ENCODE measurements at regions of chr21 and their contacts with region 1.

Region 1: DNA sequence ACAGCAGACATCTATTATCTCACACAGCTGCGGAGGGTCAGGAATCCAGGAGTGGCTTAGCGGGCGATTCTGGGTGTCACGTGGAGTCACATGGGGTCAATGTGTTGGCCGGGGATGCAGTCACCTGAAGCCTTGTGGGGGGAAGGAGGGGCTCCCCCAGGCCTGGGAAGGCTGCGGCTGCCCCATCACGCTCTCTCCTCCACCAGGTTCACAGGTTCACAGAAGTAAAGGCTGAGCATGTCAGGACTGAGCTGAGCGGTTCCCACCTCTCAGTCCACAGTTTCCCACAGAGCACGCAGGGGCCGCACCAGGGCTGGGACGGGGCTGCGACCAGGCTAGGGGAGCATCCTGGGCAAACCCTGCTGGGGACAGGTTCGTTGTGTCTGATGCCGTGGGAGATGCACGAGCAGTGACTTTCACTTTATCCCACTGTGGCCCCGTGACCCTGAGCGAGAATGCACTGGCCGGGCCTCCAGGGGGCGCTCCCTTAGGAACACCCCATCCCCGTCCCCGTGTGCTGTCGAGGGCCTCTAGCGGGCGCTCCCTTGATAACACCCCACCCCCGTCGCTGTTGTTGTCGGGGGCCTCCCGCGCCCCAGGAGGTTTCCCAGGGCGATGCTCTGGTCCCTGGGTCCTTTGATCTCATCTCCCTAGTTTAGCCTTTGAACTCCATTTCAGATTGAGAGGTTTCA is 73.2 kb upstream of the TRAPPC10 start:
- DNase-seq: peak; percentile 82
- ATAC-seq: peak; percentile 97
- H3K4me3 Mint-ChIP-seq: peak overlapping the region; percentile 92
- H3K27ac Mint-ChIP-seq: peak overlapping the region; percentile 74
- H3K4me1 Mint-ChIP-seq: peaks cover 22% of the 10 kb centered on the region
- H3K27me3 Mint-ChIP-seq: no peaks in the 10 kb centered on the region
- CTCF ChIP-seq: peak; percentile 47

Region 2: DNA sequence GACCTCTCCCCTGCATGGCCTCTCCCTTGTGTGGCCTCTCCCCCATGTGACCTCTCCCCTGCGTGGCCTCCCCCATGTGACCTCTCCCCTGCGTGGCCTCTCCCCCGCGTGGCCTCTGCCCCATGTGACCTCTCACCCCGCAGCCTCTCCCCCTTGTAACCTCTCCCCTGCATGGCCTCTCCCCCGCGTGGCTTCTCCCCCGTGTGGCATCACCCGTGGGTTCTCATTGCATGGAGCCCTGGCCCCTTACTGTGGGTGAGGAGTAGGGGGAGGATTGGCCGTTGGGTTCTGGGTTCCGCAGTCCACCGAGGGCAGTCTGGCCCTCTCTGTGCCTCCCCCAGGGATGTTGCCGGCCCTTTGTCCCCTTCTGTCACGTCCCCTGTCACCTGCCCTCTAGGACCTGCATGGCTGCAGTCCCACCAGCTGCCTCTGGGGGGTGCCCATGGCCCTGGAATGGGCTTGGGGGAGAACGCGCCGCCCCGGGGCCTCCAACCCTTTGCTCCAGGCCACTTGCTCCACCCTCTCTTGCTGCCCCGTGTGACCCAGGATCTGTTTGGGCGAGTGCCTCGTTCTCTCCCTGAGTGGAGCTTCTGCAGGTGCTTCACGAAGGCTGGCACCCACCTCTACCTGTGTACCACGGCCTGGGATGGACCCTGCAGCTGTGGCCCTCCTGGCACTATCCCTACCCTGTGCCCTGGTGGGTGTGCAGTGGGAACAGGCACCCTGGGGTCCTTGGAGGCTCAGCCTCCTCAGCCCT is 128.2 kb before region 1 on chr21:
- CTCF ChIA-PET with region 1: interaction called, 9 read pairs
- POLR2A ChIA-PET with region 1: interaction called, 3 read pairs
- intact Hi-C with region 1: loop called (anchors 1 kb)
- DNase-seq: peak; percentile 88
- ATAC-seq: peak; percentile 97
- H3K4me3 Mint-ChIP-seq: no peak overlapping the region
- H3K27ac Mint-ChIP-seq: no peak overlapping the region
- H3K4me1 Mint-ChIP-seq: peaks cover 28% of the 10 kb centered on the region
- H3K27me3 Mint-ChIP-seq: peaks cover 7% of the 10 kb centered on the region
- CTCF ChIP-seq: peak; percentile 68

Region 3: DNA sequence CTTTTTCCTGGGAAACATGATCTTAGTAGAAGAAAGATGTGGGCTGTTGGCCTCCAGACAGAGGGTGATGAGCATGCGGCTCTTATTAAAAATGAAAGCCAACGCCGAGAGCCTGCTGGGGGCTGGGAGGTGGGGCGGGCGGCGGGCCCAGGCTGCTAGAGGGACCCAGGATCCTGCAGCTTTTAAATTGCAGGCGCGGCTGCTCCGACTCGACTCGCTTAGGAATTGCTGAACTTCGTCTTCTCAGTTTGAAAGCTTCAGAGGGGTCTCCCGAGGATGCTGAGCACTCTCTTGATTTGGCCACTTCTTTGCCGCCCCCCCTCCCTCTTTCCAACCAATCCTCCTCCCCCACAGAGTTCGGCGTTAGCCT is 72.7 kb before region 1 on chr21:
- CTCF ChIA-PET with region 1: no interaction called
- POLR2A ChIA-PET with region 1: no interaction called
- intact Hi-C with region 1: loop called (anchors 1 kb)
- DNase-seq: no peak
- ATAC-seq: peak; percentile 29
- H3K4me3 Mint-ChIP-seq: peak overlapping the region; percentile 82
- H3K27ac Mint-ChIP-seq: peak overlapping the region; percentile 83
- H3K4me1 Mint-ChIP-seq: peaks cover 46% of the 10 kb centered on the region
- H3K27me3 Mint-ChIP-seq: no peaks in the 10 kb centered on the region
- CTCF ChIP-seq: no peak

Region 4: DNA sequence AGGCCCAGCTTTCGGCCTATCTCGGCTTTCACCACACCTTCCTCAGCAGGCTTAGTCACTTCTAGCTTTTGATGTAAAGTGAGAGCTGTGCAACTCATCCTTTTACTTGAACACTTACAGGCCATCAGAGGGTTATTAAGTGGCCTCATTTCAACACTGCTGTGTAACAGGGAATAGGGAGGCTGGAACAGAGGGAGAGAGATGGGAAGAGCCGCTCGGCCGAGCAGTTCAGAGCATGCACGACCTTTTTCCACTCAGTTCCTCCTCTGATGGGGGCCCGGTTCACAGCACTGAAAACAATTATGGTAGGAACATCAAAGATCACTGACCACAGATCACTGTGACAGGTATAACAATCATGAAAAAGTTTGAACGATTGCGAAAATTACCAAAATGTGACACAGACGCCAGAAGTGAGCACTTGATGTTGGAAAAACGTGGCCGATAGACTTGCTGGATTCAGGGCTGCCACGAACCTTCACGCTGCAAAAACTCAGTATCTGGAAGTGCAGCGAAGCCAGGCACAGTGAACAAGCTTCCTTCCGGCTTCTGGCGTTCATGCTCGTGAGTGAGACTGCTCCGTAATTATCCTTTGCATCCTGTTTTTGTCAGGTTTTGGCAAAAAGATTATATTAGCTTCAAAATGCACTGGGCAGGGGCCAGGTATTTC is 45.2 kb before region 1 on chr21:
- CTCF ChIA-PET with region 1: interaction called, 3 read pairs
- POLR2A ChIA-PET with region 1: no interaction called
- intact Hi-C with region 1: loop called (anchors 2 kb)
- DNase-seq: no peak
- ATAC-seq: peak; percentile 57
- H3K4me3 Mint-ChIP-seq: peak overlapping the region; percentile 77
- H3K27ac Mint-ChIP-seq: peak overlapping the region; percentile 30
- H3K4me1 Mint-ChIP-seq: peaks cover 26% of the 10 kb centered on the region
- H3K27me3 Mint-ChIP-seq: no peaks in the 10 kb centered on the region
- CTCF ChIP-seq: no peak

Region 5: GRCh38 chr21:43916691-43917514 is 22.0 kb before region 1 on chr21:
- CTCF ChIA-PET with region 1: no interaction called
- POLR2A ChIA-PET with region 1: no interaction called
- intact Hi-C with region 1: loop called (anchors 1 kb)
- DNase-seq: peak; percentile 37
- ATAC-seq: peak; percentile 64
- H3K4me3 Mint-ChIP-seq: peak overlapping the region; percentile 81
- H3K27ac Mint-ChIP-seq: peak overlapping the region; percentile 68
- H3K4me1 Mint-ChIP-seq: peaks cover 63% of the 10 kb centered on the region
- H3K27me3 Mint-ChIP-seq: no peaks in the 10 kb centered on the region
- CTCF ChIP-seq: no peak

Region 6: DNA sequence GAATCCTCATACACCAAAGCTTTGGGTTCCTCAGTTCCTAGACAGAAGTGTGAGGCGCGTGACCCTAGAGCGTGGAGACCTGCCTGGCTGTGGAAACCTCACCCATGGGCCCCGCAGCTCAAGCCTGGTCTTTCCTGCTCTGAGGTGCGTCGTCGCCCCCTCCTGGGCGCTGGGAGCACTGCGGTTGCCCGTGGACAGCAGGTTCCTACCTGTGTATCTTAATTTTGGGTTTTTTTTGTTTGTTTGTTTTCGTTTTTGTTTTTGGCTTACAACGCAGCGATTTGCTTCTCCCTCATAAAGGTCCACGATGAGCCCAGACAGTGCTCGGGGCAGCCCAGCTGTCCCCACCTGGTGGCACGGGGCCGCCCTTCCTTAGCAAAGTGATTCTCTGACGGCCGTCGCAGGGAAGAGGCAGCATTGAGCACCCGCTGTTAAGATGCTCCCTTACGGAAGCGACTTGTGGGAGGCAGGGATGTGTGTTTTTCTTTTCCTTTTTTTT is 36.6 kb after region 1 on chr21:
- CTCF ChIA-PET with region 1: interaction called, 5 read pairs
- POLR2A ChIA-PET with region 1: no interaction called
- intact Hi-C with region 1: loop called (anchors 1 kb)
- DNase-seq: peak; percentile 76
- ATAC-seq: peak; percentile 98
- H3K4me3 Mint-ChIP-seq: no peak overlapping the region
- H3K27ac Mint-ChIP-seq: no peak overlapping the region
- H3K4me1 Mint-ChIP-seq: peaks cover 9% of the 10 kb centered on the region
- H3K27me3 Mint-ChIP-seq: no peaks in the 10 kb centered on the region
- CTCF ChIP-seq: peak; percentile 54

Measured in activated B cell treated with CpG ODN at 0.5 μM for 24 hours (primary cell).